Ascending aorta (tissue), 2 donors: ENCODE measurements at regions of chr16 and their contacts with region 1.

Region 1: DNA sequence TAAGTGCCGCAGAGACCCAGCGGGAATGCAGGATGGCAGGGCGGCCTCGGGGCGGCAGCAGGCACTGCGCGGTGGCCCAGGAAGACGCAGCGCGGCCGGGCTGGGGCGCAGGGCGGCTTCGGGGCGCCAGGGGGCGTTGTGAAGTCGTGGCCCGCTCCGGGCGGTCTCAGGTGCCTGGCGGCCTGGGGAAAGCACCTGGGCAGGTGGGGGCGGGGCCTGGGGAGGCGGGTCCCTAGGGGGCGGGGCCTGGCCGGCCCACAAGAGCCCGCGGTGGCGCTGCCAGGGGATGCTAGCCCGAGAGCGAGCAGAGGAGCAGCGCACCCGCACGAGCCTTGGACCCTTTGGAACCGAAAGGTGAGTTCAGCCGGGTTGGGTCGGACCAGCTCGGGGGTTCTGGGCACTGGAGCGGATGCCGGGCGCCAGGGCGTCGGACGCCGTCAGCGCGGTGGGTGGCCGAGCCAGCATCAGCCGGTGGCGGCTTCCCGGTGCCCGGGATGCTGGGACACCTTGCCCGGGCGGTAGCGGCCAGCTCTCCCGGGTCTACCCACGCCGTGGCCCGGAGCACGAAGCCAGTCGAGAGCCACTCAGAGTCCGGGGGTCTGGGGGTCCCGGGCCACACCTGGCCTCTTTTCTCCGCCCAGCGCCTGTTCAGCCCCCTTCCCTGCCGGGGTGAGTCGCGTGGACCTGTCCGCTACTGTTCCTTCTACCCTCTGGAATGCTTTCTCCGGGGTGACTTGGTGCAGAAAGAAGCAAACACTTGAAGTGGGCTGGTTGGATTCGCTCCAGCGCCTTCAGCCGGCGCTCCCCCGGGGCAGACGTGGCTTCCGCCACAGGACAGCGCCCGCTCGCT is at the start of gene SCNN1G:
- DNase-seq: peak; percentile 8 to 70
- H3K4me3 ChIP-seq: peak within 1 kb of the TSS; percentile 48 to 67
- H3K27ac ChIP-seq: no peak within 1 kb of the TSS
- H3K4me1 ChIP-seq: peaks cover 8 to 12% of the 10 kb centered on the region in 2 donors
- H3K27me3 ChIP-seq: peaks cover 9% of the 10 kb centered on the region
- CTCF ChIP-seq: peak; percentile 69 to 94 (median 93)
- total RNA-seq, gene SCNN1G: not detected

Region 2: DNA sequence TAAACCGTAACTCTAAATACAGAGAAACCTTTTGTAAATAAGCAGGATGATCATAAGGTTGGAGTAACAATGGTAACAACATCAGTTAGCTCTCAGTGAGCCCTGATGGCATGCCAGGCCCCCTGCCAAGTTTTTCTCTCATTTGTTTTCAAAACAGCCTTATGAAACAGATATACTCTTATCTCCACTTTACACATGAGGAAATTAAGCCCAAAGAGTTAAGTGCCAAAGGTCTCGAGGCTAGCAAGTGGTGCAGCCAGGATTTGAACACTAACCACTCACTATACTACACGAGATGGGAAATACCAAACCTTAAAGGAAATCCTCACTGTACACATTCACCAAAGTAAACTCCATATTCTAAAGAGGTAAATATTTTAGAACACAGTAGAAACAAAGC is 48.4 kb before region 1 on chr16:
- intact Hi-C with region 1: no loop called
- DNase-seq: no peak
- H3K4me3 ChIP-seq: no peak overlapping the region
- H3K27ac ChIP-seq: peak overlapping the region; percentile 9 to 80
- H3K4me1 ChIP-seq: peaks cover 5 to 20% of the 10 kb centered on the region in 2 donors
- H3K27me3 ChIP-seq: no peaks in the 10 kb centered on the region
- CTCF ChIP-seq: no peak

Region 3: DNA sequence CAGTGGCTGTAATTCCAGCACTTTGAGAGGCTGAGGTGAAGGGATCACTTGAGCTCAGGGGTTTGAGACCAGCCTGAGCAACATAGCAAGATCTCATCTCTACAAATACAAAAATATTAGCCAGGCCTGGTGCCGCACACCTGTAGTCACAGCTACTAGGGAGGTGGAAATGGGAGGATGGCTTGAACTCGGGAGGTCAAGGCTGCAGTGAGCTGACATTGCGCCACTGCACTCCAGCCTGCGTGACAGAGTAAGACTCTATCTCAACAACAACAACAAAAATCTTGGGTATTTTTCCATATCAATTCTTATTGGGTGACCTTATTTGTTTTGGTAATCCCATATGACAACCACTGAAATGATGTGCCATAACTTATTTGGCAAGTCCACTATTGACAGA is 52.5 kb after region 1 on chr16:
- intact Hi-C with region 1: loop called (anchors 5 kb)
- DNase-seq: no peak
- H3K4me3 ChIP-seq: no peak overlapping the region
- H3K27ac ChIP-seq: no peak overlapping the region
- H3K4me1 ChIP-seq: no peaks in the 10 kb centered on the region
- H3K27me3 ChIP-seq: no peaks in the 10 kb centered on the region
- CTCF ChIP-seq: no peak

Region 4: DNA sequence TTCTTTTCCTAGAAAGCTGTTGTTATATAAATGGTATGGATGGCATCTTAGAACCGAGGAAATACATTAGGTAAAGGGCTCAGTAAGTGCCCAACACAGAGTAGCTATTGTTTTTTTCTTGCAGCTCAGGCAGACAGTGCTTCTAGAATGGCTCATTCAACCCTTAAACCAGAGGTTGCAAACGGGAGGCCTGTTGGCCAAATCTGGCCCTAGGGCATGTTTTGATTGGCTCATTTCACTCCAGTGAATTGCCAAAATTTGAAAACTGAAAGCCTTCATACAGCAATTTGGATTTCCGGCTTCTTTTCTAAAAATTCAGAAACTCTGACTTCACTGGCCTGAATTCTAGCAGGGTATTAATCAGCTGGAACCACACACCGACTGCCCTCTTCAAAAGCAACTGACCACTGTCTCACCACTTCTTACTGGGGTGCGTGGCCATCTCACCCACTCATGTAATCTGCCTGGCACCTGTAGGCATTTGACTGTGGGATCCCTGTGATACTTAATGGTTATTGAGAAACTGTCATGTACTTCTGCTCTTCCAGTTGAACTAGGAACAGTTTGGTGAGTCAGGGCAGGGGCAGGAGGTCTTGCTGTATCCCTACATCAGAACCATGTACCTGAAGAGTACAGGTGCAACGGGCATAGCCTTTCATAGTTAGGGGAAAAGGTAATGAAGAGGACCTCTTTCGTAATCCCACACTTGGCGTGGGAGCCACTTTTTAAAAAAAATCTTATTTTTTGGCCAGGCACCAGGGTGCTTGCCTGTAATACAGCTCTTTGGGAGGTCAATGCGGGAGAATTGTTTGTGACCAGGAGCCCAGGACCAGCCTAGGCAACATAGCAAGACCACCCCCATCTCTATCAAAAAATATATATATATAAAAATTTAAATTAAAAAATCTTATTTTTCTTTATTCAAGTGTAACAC is 65.8 kb after region 1 on chr16:
- intact Hi-C with region 1: loop called (anchors 5 kb)
- DNase-seq: peak in 1 of 2 donors; percentile 71
- H3K4me3 ChIP-seq: no peak overlapping the region
- H3K27ac ChIP-seq: peak overlapping the region; percentile 51 to 54
- H3K4me1 ChIP-seq: peaks cover 3 to 21% of the 10 kb centered on the region in 2 donors
- H3K27me3 ChIP-seq: no peaks in the 10 kb centered on the region
- CTCF ChIP-seq: no peak

Region 5: GRCh38 chr16:23434380-23434779 is 251.7 kb after region 1 on chr16:
- intact Hi-C with region 1: loop called (anchors 1 kb)
- DNase-seq: no peak
- H3K4me3 ChIP-seq: no peak overlapping the region
- H3K27ac ChIP-seq: no peak overlapping the region
- H3K4me1 ChIP-seq: no peaks in the 10 kb centered on the region
- H3K27me3 ChIP-seq: no peaks in the 10 kb centered on the region
- CTCF ChIP-seq: peak; percentile 75 to 81 (median 75)